Transverse colon (tissue), 4 donors: ENCODE measurements at regions of chr3 and their contacts with region 1.

Region 1: DNA sequence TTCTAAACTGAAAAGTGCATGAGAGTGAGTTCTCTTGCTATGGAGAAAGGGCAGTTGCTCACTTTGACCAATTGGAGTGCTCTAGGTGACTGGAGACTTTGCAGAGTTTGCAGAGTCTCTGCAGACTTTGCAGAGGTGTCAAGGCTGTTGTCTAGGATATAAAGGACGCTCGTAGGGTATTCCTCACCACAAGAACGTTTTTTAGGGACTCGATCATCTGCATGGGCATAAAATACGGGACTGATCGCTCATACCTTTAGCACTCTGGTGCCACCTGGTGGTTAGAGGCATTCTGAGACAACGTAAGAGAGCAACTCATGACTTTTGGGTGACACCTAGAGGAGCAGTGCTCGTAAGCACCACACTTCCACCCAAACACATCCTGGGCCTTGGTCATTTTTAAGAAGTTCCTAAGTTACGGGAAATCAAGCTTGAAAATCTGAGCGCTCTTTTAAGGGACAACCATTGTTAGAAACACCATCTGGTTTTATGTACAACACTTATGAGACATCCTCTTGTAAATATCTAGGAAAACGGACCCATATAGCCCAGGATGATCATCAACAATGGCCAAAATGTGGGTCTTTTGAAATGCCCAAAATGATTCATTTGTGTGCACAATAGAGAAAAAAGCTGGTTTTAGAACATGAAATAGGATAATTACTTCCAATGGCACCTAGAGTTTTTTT is 51.6 kb upstream of the XCR1 start:
- DNase-seq: peak; percentile 93
- H3K4me3 ChIP-seq: peak overlapping the region in 1 of 4 donors; percentile 27
- H3K27ac ChIP-seq: no peak overlapping the region
- H3K4me1 ChIP-seq: peaks cover 0 to 8% (median 0%) of the 10 kb centered on the region in 4 donors
- H3K27me3 ChIP-seq: no peaks in the 10 kb centered on the region
- CTCF ChIP-seq: peak; percentile 94 to 99 (median 97)
- EP300 ChIP-seq: no peak
- POLR2A ChIP-seq: no peak

Region 2: GRCh38 chr3:45730409-45731154 is 348.3 kb before region 1 on chr3:
- in situ Hi-C with region 1: no loop called
- intact Hi-C with region 1: no loop called
- DNase-seq: no peak
- H3K4me3 ChIP-seq: no peak overlapping the region
- H3K27ac ChIP-seq: no peak overlapping the region
- H3K4me1 ChIP-seq: no peaks in the 10 kb centered on the region
- H3K27me3 ChIP-seq: no peaks in the 10 kb centered on the region
- CTCF ChIP-seq: no peak
- EP300 ChIP-seq: no peak
- POLR2A ChIP-seq: no peak

Region 3: DNA sequence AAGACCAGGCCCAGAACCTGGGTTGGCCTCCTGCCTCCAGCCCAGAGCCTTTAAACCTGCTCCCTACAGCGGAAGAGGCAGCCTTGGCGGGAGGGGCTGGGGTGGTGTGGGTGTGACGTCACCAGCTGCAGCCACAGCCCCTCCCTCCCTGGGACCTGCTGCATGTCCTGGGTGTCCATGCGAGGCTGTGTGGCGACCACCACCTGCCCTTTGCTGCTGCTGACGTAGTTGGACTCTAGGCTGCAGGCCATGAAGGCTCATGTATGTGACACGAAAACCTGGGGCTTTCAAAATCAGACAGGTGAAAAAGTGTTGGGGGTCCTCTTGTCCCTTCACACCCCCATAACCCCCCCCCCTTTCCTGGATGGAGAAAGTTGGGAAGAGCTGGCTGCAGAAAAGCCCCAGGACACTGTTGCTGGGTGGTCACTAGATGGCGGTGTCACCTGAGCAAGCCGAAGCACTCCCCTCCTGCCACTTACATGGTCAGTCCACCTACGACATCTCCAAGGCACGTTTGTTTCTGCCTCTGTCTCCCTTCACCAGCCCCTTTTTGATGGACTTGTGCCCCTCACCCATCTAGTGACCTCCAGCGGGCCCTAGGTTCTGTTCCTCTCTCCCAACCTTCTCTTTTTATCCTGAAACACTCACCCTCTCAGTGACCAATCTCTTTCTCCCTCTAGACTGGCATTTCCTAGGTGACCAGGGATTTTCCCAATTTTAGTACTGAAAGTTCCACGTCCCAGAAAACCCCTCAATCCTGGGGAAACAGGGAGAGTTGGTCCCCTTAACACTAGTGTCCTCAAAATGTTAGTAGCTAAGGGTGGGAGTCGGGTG is 317.8 kb before region 1 on chr3:
- in situ Hi-C with region 1: loop called (anchors 10 to 25 kb)
- intact Hi-C with region 1: loop called (anchors 10 kb)
- DNase-seq: peak; percentile 58
- H3K4me3 ChIP-seq: no peak overlapping the region
- H3K27ac ChIP-seq: no peak overlapping the region
- H3K4me1 ChIP-seq: peaks cover 0 to 3% (median 0%) of the 10 kb centered on the region in 4 donors
- H3K27me3 ChIP-seq: no peaks in the 10 kb centered on the region
- CTCF ChIP-seq: peak; percentile 65 to 82 (median 77)
- EP300 ChIP-seq: no peak
- POLR2A ChIP-seq: no peak

Region 4: DNA sequence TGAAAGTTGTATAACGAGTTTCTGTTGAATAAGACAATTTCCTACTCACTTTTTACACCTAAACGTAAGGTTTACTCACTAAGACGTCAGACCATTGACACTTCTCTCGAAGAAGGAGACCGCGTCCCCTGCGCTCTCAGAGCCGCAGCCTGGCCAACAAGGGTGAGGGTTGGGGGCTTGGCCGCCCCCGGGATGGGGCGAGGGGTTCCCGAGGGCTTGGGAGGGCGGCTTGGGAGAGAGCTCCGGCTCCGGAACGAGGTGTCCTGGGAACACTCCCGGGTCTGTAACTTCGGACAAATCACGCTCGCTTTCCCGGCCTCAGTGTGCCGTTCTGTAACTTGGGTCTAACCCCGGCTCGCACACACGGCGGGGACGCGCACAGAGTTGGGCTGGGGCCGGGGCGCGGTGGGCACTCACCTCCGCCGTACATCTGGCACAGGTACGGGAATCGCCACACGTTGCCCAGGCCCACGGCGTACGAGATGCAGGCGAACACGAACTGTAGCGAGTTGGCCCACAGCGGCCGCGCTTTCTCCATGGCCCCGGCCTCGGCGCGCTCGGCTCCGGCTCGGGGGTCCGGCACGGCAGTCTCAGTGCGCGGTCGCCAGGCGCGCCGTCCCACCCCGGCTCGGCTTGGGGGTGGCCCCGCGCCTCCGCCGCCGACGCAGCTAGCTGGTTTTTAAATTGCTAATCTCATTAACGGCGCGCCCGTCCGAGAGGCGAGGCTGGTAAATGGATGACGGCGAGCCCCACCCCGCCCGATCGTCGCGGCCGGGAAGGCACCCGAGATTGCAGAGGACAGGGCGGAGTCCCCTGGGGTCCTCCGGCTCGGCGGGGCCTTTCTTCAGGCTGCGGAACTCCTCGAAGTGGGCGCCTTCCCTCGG is 282.7 kb before region 1 on chr3 and contains the start of gene SLC6A20:
- in situ Hi-C with region 1: no loop called
- intact Hi-C with region 1: no loop called
- DNase-seq: peak; percentile 58
- H3K4me3 ChIP-seq: peak within 1 kb of the TSS; percentile 9 to 46 (median 28)
- H3K27ac ChIP-seq: no peak within 1 kb of the TSS
- H3K4me1 ChIP-seq: peaks cover 6 to 10% (median 10%) of the 10 kb centered on the region in 4 donors
- H3K27me3 ChIP-seq: peaks cover 47% of the 10 kb centered on the region
- CTCF ChIP-seq: no peak
- EP300 ChIP-seq: no peak
- POLR2A ChIP-seq: no peak
- total RNA-seq, gene SLC6A20: 0.32 to 0.41 TPM in 2 of 4 donors, not detected in the others

Region 5: GRCh38 chr3:46208167-46208704 is 129.4 kb after region 1 on chr3 and contains the start of gene CCR1:
- in situ Hi-C with region 1: loop called in 1 of 4 experiments (anchors 25 kb)
- intact Hi-C with region 1: no loop called
- DNase-seq: peak; percentile 57
- H3K4me3 ChIP-seq: peak within 1 kb of the TSS in 1 of 4 donors; percentile 33
- H3K27ac ChIP-seq: peak within 1 kb of the TSS; percentile 17 to 59 (median 38)
- H3K4me1 ChIP-seq: no peaks in the 10 kb centered on the region
- H3K27me3 ChIP-seq: no peaks in the 10 kb centered on the region
- CTCF ChIP-seq: peak; percentile 12 to 43 (median 30)
- EP300 ChIP-seq: no peak
- POLR2A ChIP-seq: no peak
- total RNA-seq, gene CCR1: 1.9 to 4.4 (median 3.3) TPM in 3 of 4 donors, not detected in the other

Region 6: DNA sequence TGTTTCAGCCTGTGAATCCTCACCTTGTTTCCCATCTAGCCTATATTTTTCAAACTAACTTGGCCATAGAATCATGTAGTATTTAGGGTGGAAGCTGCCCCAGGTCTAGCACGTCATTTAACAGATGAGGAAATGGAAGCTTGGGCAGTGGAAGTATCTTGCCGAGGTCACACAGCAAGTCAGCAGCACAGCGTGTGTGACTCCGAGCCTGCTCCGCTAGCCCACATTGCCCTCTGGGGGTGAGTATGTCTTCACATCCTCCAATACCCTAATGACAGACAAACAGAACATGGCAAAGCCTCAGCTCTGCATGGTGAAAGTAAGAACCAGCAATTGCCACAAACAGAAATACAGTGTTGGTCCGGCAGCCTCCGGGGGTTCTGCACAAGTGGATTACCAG is 289.7 kb after region 1 on chr3:
- in situ Hi-C with region 1: loop called in 3 of 4 experiments (anchors 10 to 25 kb)
- intact Hi-C with region 1: no loop called
- DNase-seq: peak; percentile 77
- H3K4me3 ChIP-seq: no peak overlapping the region
- H3K27ac ChIP-seq: peak overlapping the region in 3 of 4 donors; percentile 17 to 56 (median 36)
- H3K4me1 ChIP-seq: no peaks in the 10 kb centered on the region
- H3K27me3 ChIP-seq: no peaks in the 10 kb centered on the region
- CTCF ChIP-seq: peak in 3 of 5 experiments; percentile 18 to 33 (median 24)
- EP300 ChIP-seq: no peak
- POLR2A ChIP-seq: no peak

Region 7: DNA sequence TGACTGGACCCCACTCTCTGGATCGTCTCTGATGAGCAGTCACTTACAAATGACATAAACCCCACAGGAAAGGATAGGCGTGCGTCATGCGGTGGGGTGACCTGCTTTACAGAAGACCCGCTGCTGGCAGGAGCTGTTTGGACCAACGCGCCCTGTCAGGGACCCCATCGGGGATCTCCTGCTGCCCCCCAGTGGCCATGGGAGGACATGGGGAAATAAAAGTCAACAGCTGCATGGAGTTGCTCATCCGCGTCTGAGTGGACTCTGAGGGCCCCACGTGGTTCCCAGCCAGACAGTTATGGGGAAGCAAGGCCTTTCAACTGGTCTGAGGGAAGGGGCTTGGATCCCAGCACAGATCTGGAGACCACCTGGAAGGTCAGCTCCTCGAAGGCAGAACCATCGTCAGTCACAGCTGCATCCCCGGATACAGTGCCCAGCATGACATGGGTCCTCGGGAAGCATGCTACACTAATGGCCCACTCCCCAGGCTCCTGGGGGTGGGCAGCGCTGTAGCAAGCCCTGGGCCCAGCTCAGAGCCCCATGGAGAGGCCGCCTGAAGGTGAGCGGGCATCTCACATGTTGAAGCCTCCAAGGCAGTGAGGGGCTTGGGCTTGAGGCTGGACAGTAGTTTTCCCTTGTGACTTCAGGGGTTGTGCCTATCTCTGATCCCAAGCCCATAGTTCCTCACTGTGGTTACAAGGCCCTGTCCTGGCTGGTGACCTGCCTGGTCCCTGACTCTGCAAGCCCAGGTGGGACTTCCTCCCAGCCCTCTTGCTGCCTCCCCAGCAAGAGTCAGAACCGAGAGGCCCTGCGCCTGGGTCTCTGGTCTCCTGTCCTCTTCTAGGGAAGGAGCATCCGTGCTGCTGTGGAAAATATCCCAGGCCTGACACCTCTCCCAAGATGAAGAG is 830.9 kb after region 1 on chr3:
- in situ Hi-C with region 1: no loop called
- intact Hi-C with region 1: no loop called
- DNase-seq: peak; percentile 79
- H3K4me3 ChIP-seq: no peak overlapping the region
- H3K27ac ChIP-seq: no peak overlapping the region
- H3K4me1 ChIP-seq: peaks cover 4 to 18% (median 13%) of the 10 kb centered on the region in 4 donors
- H3K27me3 ChIP-seq: no peaks in the 10 kb centered on the region
- CTCF ChIP-seq: peak; percentile 82 to 87 (median 85)
- EP300 ChIP-seq: no peak
- POLR2A ChIP-seq: no peak